Vagina (tissue), 2 donors: ENCODE measurements at regions of chr6 and their contacts with region 1.

Region 1: DNA sequence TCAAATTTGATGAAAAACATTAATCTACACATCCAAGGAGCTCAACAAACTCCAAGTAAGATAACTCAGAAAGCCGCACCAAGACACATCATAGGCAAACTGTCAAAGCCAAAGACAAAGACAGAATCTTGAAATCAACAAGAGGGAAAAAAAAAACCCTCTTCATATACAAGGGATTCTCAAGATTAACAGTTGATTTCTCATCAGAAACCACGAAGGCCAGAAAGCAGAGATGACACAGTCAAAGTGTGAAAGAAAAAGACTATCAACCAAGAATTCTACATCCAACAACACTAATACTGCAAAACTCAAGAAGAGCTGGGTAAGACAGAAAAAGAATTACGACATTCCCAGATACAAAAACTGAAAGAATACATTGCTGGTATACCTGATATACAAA is 73.8 kb downstream of the CDK19 start:
- DNase-seq: no peak
- H3K4me3 ChIP-seq: no peak overlapping the region
- H3K27ac ChIP-seq: no peak overlapping the region
- H3K4me1 ChIP-seq: no peaks in the 10 kb centered on the region
- H3K27me3 ChIP-seq: no peaks in the 10 kb centered on the region
- CTCF ChIP-seq: no peak
- POLR2A ChIP-seq: no peak

Region 2: GRCh38 chr6:108966855-108967755 is 1774.4 kb before region 1 on chr6:
- intact Hi-C with region 1: loop called (anchors 5 kb)
- DNase-seq: no peak
- H3K4me3 ChIP-seq: no peak overlapping the region
- H3K27ac ChIP-seq: no peak overlapping the region
- H3K4me1 ChIP-seq: no peaks in the 10 kb centered on the region
- H3K27me3 ChIP-seq: no peaks in the 10 kb centered on the region
- CTCF ChIP-seq: no peak
- POLR2A ChIP-seq: no peak

Region 3: GRCh38 chr6:111047244-111047643 is 305.7 kb after region 1 on chr6:
- intact Hi-C with region 1: no loop called
- DNase-seq: no peak
- H3K4me3 ChIP-seq: no peak overlapping the region
- H3K27ac ChIP-seq: no peak overlapping the region
- H3K4me1 ChIP-seq: no peaks in the 10 kb centered on the region
- H3K27me3 ChIP-seq: no peaks in the 10 kb centered on the region
- CTCF ChIP-seq: no peak
- POLR2A ChIP-seq: no peak